Naive thymus-derived CD4-positive, alpha-beta T cell (primary cell): ENCODE measurements at regions of chr3 and their contacts with region 1.

Region 1: DNA sequence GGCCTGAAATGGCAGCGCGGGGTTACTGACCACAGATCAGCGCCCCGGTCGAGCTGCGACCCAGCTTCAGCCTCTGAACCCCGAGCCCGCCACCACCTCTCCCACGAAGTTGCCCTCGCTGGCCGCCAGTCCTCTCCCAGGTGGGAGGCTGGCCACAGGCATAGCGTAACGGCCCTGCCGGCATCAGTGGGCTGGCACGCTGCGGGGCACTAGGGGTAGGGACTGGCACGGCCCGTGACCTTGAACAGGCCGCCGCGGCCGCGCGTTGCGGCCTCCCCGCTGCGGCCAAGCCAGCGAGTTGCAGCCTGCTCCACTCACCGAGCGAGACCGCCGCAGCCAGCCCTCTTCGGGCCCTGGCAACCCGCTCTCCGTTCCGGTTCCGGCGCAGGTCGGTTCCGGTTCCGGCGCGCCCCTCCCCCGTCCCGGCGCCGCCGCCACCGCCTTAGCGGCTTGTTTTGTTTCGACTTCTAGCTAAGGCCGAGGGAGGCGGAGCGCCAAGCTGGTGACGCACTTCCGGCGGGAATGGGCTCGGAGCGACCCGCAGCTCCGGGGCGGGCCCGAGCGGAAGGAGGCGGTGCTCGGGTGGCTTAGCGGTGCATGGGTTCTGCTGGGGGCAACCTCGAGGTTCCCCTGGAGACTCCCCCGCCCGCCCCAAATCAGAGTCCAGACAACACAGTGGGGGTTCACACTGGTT is at the start of gene USP19:
- DNase-seq: peak; percentile 92 to 96 (median 95)
- ATAC-seq: peak; percentile 96
- H3K4me3 ChIP-seq: peak within 1 kb of the TSS; percentile 70
- H3K4me3 Mint-ChIP-seq: peak within 1 kb of the TSS; percentile 80 to 97 (median 88)
- H3K27ac ChIP-seq: peak within 1 kb of the TSS; percentile 92
- H3K27ac Mint-ChIP-seq: peak within 1 kb of the TSS; percentile 83 to 96 (median 94)
- H3K4me1 ChIP-seq: peaks cover 17 to 27% of the 10 kb centered on the region in 2 donors
- H3K4me1 Mint-ChIP-seq: peaks cover 0 to 31% (median 25%) of the 10 kb centered on the region in 7 donors
- H3K27me3 ChIP-seq: no peaks in the 10 kb centered on the region
- H3K27me3 Mint-ChIP-seq: no peaks in the 10 kb centered on the region
- total RNA-seq, gene USP19: 60.0 to 106 (median 78.0) TPM

Region 2: GRCh38 chr3:48989796-48990635 is 130.6 kb before region 1 on chr3 and contains the start of gene P4HTM:
- CTCF ChIA-PET with region 1: interaction called, 6 read pairs
- POLR2A ChIA-PET with region 1: interaction called, 6 read pairs
- intact Hi-C with region 1: loop called in 1 of 2 experiments (anchors 1 kb)
- DNase-seq: peak; percentile 36 to 83 (median 55)
- ATAC-seq: peak; percentile 68
- H3K4me3 ChIP-seq: peak within 1 kb of the TSS; percentile 96
- H3K4me3 Mint-ChIP-seq: peak within 1 kb of the TSS; percentile 89 to 97 (median 93)
- H3K27ac ChIP-seq: peak within 1 kb of the TSS; percentile 82
- H3K27ac Mint-ChIP-seq: peak within 1 kb of the TSS; percentile 87 to 95 (median 90)
- H3K4me1 ChIP-seq: peaks cover 24% of the 10 kb centered on the region in 2 donors
- H3K4me1 Mint-ChIP-seq: peaks cover 27 to 56% (median 42%) of the 10 kb centered on the region in 7 donors
- H3K27me3 ChIP-seq: no peaks in the 10 kb centered on the region
- H3K27me3 Mint-ChIP-seq: no peaks in the 10 kb centered on the region
- total RNA-seq, gene P4HTM: 37.9 to 74.7 (median 53.1) TPM

Region 3: DNA sequence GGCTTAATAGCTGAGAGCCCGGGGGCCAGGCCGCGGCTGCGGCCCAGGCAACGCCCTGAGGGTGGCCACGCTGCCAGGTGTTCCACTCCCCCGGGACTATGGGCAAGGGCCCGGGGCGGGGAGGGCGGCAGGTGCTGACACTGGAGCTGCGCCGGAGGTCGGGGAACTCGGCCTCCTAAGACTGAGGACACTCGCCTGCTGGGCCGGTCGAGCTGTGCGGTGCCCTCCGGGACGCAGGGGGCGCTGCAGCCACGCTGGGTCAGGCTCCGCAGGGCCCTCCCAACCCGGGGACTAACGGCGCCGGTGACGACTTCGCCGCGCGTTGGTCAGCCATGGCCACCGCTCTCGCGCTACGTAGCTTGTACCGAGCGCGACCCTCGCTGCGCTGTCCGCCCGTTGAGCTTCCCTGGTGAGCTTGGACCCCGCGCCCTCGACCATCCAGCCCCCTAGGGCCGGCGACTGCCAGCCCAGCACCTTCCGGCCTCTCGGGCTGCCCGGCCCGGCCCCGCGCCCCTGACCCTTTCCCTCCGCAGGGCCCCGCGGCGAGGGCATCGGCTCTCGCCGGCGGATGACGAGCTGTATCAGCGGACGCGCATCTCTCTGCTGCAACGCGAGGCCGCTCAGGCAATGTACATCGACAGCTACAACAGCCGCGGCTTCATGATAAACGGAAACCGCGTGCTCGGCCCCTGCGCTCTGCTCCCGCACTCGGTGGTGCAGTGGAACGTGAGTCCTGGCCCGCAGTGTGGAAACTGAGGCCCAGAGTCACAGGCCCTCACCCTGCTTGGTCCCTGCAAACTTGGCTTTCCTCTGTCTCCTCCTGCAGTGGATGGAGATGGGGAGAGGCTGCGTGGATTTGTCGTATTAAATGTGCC is 98.5 kb before region 1 on chr3 and contains the start of gene NDUFAF3:
- CTCF ChIA-PET with region 1: no interaction called
- POLR2A ChIA-PET with region 1: interaction called, 16 read pairs
- intact Hi-C with region 1: no loop called
- DNase-seq: peak; percentile 84 to 96 (median 89)
- ATAC-seq: peak; percentile 89
- H3K4me3 ChIP-seq: peak within 1 kb of the TSS; percentile 99
- H3K4me3 Mint-ChIP-seq: peak within 1 kb of the TSS; percentile 92 to 99 (median 97)
- H3K27ac ChIP-seq: peak within 1 kb of the TSS; percentile 98
- H3K27ac Mint-ChIP-seq: peak within 1 kb of the TSS; percentile 95 to 99 (median 98)
- H3K4me1 ChIP-seq: peaks cover 24 to 25% of the 10 kb centered on the region in 2 donors
- H3K4me1 Mint-ChIP-seq: peaks cover 21 to 61% (median 47%) of the 10 kb centered on the region in 7 donors
- H3K27me3 ChIP-seq: no peaks in the 10 kb centered on the region
- H3K27me3 Mint-ChIP-seq: peaks cover 0 to 2% (median 0%) of the 10 kb centered on the region in 5 donors
- total RNA-seq, gene NDUFAF3: 63.8 to 110 (median 89.3) TPM

Region 4: GRCh38 chr3:49104483-49105291 is 15.9 kb before region 1 on chr3 and contains the start of gene QARS1:
- CTCF ChIA-PET with region 1: no interaction called
- POLR2A ChIA-PET with region 1: interaction called, 84 read pairs
- intact Hi-C with region 1: loop called (anchors 1 kb)
- DNase-seq: peak; percentile 77 to 90 (median 87)
- ATAC-seq: peak; percentile 100
- H3K4me3 ChIP-seq: peak within 1 kb of the TSS; percentile 99
- H3K4me3 Mint-ChIP-seq: peak within 1 kb of the TSS; percentile 89 to 98 (median 96)
- H3K27ac ChIP-seq: peak within 1 kb of the TSS; percentile 94
- H3K27ac Mint-ChIP-seq: peak within 1 kb of the TSS; percentile 91 to 100 (median 98)
- H3K4me1 ChIP-seq: peaks cover 14 to 18% of the 10 kb centered on the region in 2 donors
- H3K4me1 Mint-ChIP-seq: peaks cover 16 to 41% (median 26%) of the 10 kb centered on the region in 7 donors
- H3K27me3 ChIP-seq: no peaks in the 10 kb centered on the region
- H3K27me3 Mint-ChIP-seq: no peaks in the 10 kb centered on the region
- total RNA-seq, gene QARS1: 212 to 258 (median 233) TPM

Region 5: GRCh38 chr3:49165771-49166751 is 45.5 kb after region 1 on chr3 and contains the start of gene CCDC71:
- CTCF ChIA-PET with region 1: no interaction called
- POLR2A ChIA-PET with region 1: interaction called, 20 read pairs
- intact Hi-C with region 1: loop called (anchors 1 kb)
- DNase-seq: peak; percentile 63 to 82 (median 72)
- ATAC-seq: peak; percentile 85
- H3K4me3 ChIP-seq: peak within 1 kb of the TSS; percentile 58
- H3K4me3 Mint-ChIP-seq: peak within 1 kb of the TSS; percentile 89 to 96 (median 92)
- H3K27ac ChIP-seq: peak within 1 kb of the TSS; percentile 79
- H3K27ac Mint-ChIP-seq: peak within 1 kb of the TSS; percentile 87 to 96 (median 93)
- H3K4me1 ChIP-seq: peaks cover 16 to 29% of the 10 kb centered on the region in 2 donors
- H3K4me1 Mint-ChIP-seq: peaks cover 16 to 51% (median 42%) of the 10 kb centered on the region in 7 donors
- H3K27me3 ChIP-seq: no peaks in the 10 kb centered on the region
- H3K27me3 Mint-ChIP-seq: no peaks in the 10 kb centered on the region
- total RNA-seq, gene CCDC71: 16.5 to 39.5 (median 26.3) TPM

Region 6: DNA sequence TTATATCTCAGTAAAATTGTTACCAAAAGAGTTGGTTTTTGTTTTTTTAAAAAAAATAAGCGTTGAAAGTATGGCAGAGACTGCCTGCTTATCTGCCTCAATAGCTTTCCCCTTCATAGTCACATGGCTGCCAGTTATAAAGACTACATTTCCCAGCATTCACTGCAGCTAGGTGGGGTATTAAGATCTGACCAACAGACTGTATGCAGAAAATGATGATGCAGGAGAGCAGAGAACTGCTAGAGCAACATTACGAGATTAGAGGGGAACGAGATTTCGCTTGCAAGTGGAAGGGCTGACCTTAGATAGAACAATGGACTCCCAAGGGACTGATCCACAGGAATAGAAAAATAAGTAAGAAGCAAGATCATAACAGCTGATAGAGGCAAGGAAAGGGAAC is 276.9 kb after region 1 on chr3:
- CTCF ChIA-PET with region 1: no interaction called
- POLR2A ChIA-PET with region 1: no interaction called
- intact Hi-C with region 1: no loop called
- DNase-seq: no peak
- ATAC-seq: peak; percentile 45
- H3K4me3 ChIP-seq: no peak overlapping the region
- H3K4me3 Mint-ChIP-seq: peak overlapping the region in 4 of 10 donors; percentile 0 to 41 (median 12)
- H3K27ac ChIP-seq: no peak overlapping the region
- H3K27ac Mint-ChIP-seq: peak overlapping the region in 5 of 9 donors; percentile 13 to 66 (median 37)
- H3K4me1 ChIP-seq: peaks cover 7 to 10% of the 10 kb centered on the region in 2 donors
- H3K4me1 Mint-ChIP-seq: peaks cover 50 to 88% (median 73%) of the 10 kb centered on the region in 7 donors
- H3K27me3 ChIP-seq: no peaks in the 10 kb centered on the region
- H3K27me3 Mint-ChIP-seq: no peaks in the 10 kb centered on the region

Region 7: GRCh38 chr3:49411968-49412631 is 291.5 kb after region 1 on chr3 and contains the starts of genes RHOA and TCTA:
- CTCF ChIA-PET with region 1: no interaction called
- POLR2A ChIA-PET with region 1: no interaction called
- intact Hi-C with region 1: loop called in 1 of 2 experiments (anchors 1 kb)
- DNase-seq: peak; percentile 94 to 100 (median 99)
- ATAC-seq: peak; percentile 90
- H3K4me3 ChIP-seq: peak within 1 kb of the TSS; percentile 86
- H3K4me3 Mint-ChIP-seq: peak within 1 kb of the TSS; percentile 82 to 97 (median 94)
- H3K27ac ChIP-seq: peak within 1 kb of the TSS; percentile 96
- H3K27ac Mint-ChIP-seq: peak within 1 kb of the TSS; percentile 88 to 97 (median 95)
- H3K4me1 ChIP-seq: peaks cover 61 to 65% of the 10 kb centered on the region in 2 donors
- H3K4me1 Mint-ChIP-seq: peaks cover 51 to 82% (median 71%) of the 10 kb centered on the region in 7 donors
- H3K27me3 ChIP-seq: no peaks in the 10 kb centered on the region
- H3K27me3 Mint-ChIP-seq: peaks cover 0 to 2% (median 0%) of the 10 kb centered on the region in 5 donors
- total RNA-seq, gene RHOA: 212 to 411 (median 218) TPM
- total RNA-seq, gene TCTA: 24.9 to 34.5 (median 28.5) TPM